Posterior vena cava (tissue), 2 donors: ENCODE measurements at regions of chr5 and their contacts with region 1.

Region 1: GRCh38 chr5:178341091-178341850 is 108.7 kb upstream of the PHYKPL start:
- DNase-seq: peak; percentile 42

Region 2: DNA sequence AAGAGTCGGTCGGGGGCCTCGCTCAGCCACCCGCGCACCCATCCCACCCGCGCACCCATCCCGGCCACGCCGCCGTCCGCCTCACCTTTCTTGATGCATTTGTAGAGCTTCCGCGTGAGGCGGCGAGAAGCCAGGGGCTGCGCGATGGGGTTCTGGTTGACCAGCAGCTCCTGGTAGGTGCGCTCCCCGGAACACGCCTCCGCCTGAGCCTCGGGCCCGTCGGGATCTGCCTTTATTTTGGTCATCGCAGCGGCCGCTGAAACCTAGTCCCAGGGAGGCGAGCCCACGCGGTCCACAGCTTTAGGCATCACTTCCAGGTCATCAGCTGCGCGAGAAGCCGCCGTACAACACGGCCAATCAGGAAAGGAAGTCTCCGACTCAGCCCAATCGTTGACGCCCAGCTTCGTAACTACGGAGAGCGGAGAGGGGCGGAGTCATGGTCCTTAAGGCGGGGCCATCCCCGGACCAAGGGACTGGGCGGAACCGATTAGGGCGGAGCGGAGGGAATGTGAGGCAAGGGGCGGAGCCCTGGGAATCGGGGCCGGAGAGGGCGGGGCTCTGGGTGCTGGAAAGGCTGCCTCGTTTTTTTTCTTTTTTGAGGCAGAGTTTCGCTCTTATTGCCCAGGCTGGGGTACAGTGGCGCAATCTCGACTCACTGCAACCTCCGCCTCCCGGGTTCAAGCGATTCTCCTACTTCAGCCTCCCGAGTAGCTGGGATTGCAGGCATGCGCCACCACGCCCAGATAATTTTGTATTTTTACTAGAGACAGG is 187.5 kb before region 1 on chr5 and contains the start of gene NHP2:
- intact Hi-C with region 1: no loop called
- DNase-seq: peak; percentile 99
- total RNA-seq, gene NHP2: 73.9 to 87.3 TPM

Region 3: DNA sequence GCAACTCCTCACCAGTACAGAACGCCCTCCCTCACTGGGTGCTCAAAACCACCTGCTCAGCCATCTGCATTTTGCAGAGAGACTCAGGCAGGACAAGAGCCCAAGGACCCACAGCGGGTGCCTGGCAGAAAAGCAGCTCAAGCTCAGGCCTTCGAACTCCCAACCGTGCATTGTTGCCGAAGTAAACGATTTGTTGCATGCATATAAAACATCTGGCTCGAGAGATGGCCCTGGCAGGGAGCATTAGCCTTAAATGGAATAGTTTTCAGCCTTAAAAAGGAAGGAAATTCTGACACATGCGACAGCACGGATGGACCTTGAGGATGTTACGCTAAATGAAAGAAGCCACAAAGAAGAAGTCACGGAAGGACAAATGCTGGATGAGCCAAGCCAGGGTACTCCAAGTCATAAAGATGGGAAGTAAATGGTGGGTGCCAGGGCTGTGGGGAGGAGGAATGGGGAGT is 51.7 kb after region 1 on chr5:
- intact Hi-C with region 1: loop called in 1 of 2 experiments (anchors 1 kb)
- DNase-seq: peak; percentile 57